ENCODE measurements at regions of chr1 and their contacts with region 1.

Region 1: DNA sequence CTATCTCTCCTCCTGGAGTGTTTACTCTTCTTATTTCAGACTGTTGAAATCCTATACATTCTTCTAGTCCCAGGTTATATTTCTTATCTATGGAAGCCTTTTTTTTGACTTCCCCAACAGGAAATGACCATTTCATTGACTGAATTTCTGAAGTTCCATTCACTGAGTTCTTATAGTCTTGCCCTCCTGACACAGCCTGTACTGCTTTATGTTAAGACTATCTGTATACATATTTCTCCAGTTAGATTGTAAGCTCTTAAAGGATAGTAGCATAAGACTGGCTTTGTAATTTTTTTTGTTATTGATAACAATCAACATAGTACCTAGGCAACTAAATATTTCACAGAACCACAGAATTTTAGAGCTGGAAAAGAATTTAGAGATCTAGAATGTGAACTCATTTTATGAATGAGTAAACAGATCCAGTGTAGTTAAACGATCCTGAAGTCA is 14.9 kb upstream of the MACF1 start:
- DNase-seq: no peak
- ATAC-seq: no peak

Region 2: DNA sequence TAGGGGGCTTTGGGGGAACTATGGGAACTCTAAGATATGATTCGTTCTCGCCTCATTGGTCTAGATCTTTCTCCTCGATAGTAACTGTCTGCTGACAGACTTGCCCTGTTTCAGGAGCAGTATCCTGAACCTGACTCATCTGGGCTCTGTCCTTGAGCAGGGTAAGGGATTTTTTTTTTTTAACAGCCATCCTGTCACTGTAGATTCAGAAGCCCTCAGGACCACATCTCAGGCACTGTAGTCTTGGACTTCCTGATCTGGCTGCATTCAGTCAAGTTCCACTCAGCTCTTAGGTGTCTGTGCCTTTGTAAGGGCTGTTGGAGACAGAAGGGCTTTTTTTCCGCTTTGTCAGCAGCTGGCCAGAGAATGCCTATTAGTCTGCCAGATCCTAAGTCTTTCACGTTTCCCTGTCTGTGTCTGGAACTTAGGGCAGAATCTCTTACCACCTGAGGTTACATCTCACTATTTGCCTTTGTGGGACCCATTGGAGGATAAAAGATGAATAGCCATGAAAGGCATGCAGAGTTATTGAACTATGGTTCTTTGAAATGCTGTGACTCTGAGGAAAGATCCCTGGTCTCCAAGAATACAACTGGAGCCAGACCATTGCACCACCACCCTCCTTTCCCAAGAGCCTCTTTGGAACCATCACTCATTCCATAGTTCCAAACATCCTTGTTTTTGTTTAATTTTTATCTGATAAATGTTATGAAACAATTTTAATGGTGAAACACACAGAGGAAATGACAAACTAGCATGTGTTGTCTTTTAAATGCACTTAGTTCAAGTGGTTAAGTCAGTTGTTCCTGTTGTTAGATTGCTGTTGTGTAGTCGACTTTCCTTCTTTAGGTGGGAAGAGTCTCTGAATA is 34.8 kb before region 1 on chr1:
- intact Hi-C with region 1: loop called (anchors 5 kb)
- DNase-seq: no peak
- ATAC-seq: peak; percentile 88